Activated T-helper 2 cell treated with anti-CD3 and anti-CD28 coated beads, Interferon-gamma antibody, Interleukin-2, Interleukin-4, amounts not matched to agents 10 μg/mL and 5 μg/mL and 100 μg/mL, durations not matched to agents 14 hours and 24 hours and 36 hours (primary cell): ENCODE measurements at regions of chr11 and their contacts with region 1.

Region 1: DNA sequence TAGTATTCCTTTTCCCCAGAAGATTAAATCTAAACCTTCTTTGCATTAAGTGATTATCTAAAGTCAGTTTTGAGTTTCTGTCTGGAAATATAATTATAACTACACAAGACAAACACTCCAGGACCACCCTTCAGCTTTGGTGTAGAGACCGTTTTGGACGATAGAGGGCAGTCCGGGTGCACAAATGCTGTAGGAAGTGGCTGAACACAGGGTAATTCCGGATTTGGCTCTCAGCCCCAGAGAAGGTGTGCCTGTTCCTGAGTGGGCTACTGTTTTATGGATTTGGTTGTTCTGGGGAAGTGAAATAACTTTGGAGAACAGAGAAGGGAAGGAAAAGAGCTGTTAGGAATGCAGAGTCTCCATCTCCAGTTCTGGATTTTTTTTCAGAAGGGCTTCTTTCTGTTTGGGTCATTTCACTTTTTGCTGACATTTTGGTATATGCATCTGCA is 14.8 kb downstream of the EXT2 start:
- DNase-seq: peak; percentile 29
- H3K4me3 Mint-ChIP-seq: no peak overlapping the region
- H3K27ac Mint-ChIP-seq: peak overlapping the region; percentile 61
- H3K4me1 Mint-ChIP-seq: peaks cover 7% of the 10 kb centered on the region
- H3K27me3 Mint-ChIP-seq: no peaks in the 10 kb centered on the region

Region 2: DNA sequence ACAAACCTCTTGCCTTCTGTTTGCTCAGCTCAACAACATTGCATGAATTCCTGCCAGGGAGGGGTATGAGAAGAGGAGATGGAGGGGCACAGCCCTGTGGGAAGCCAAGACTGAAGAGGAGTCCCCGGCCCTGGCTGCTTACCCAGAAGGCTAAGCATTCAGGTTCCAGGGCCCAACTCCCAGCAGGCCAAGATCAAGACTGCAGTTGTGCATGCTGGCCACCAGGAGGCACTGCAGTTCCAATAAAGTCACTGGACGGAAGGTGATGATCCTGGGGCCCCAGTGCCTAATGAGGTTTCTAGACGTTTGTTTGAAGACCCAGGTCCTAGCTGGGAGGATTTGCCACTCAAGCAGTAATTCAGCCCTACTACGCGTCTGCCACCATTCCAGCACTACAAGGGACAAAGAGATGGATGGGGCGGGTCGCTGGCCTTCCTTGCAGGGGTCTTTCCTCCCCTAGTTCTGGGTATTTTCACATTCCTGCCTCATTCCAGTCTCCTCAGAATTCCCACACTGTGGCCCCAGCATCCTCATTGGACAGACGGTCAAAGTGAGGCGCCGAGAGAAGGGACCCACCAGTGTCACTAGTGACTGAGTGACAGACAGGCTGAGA is 176.1 kb after region 1 on chr11:
- intact Hi-C with region 1: loop called (anchors 10 kb)
- DNase-seq: peak; percentile 47
- H3K4me3 Mint-ChIP-seq: no peak overlapping the region
- H3K27ac Mint-ChIP-seq: no peak overlapping the region
- H3K4me1 Mint-ChIP-seq: no peaks in the 10 kb centered on the region
- H3K27me3 Mint-ChIP-seq: no peaks in the 10 kb centered on the region

Region 3: DNA sequence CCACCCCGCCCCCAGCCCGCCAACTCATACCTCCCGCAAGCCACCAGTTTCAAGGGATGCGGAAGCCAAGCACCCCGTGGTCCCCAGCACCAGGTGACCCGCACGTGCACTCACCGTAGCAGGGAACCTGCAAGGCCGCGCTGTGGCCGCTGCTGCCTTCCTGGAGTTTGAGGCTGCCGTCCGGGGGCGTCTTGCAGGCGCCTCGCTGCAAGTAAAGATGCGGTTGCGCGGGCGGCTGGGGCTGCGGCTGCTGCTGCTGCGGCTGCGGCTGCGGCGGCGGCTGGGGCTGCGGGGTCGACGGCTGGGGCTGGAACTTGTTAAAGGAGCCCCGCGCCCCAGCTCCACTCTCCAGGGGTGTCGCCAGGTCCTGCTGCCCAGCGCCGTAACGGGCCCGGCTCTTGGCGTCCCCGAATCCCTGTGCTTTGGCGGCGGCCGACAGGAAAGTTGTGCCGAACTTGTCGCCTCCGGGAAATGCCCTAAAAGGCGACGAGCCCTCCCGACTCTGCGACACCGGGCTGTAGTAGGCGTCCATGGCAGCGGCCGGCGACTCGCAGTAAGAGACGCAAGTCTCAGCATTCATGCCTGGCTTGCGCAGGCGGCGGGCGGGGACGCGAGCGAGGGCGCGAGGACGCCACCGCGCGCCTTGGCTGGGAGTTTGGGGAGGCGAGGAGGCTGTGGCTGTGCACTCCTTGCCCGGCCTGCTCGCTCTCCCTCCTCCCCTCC is 199.4 kb after region 1 on chr11 and contains the start of gene ALX4:
- intact Hi-C with region 1: loop called (anchors 5 kb)
- DNase-seq: no peak
- H3K4me3 Mint-ChIP-seq: peak within 1 kb of the TSS; percentile 56
- H3K27ac Mint-ChIP-seq: peak within 1 kb of the TSS; percentile 63
- H3K4me1 Mint-ChIP-seq: peaks cover 22% of the 10 kb centered on the region
- H3K27me3 Mint-ChIP-seq: peaks cover 88% of the 10 kb centered on the region
- total RNA-seq, gene ALX4: not detected in 2 replicates

Region 4: DNA sequence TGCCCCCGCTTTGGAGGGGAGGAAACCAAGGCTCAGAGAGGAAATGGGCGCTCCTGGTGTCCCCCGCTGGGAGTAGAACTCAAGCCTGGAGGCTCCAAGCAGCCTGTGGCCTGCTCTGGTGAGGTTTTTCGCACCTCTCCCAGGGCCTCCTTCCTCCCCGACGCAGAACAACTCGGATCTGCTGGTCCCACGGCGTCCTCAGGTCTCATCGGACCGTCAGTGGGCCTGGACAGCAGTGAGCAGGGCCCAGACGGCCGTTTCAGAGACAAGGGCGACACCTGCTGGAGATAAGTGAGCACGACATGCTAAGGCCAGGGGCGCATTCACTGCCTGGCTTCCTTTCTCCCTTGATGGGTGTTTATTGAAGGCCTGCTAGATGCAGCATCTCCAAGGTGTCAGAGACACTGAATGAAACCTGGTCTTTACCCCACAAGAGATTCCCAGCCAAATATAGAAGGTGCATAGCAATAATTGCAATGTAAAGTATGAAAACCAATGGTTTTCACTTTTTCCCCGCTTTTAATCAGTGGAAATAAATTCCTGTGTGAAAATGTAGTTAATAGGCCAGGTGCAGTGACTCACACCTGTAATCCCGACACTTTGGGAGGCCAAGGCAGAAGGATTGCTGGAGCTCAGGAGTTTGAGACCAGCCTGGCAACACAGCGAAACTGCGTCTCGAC is 428.3 kb after region 1 on chr11:
- intact Hi-C with region 1: loop called (anchors 5 kb)
- DNase-seq: peak; percentile 68
- H3K4me3 Mint-ChIP-seq: no peak overlapping the region
- H3K27ac Mint-ChIP-seq: no peak overlapping the region
- H3K4me1 Mint-ChIP-seq: no peaks in the 10 kb centered on the region
- H3K27me3 Mint-ChIP-seq: no peaks in the 10 kb centered on the region